Activated CD4-positive, alpha-beta T cell treated with anti-CD3 and anti-CD28 coated beads, Interleukin-2, amount 10 ng/mL, durations not matched to agents 24 days and 14 days (primary cell): ENCODE measurements at regions of chr20 and their contacts with region 1.

Region 1: DNA sequence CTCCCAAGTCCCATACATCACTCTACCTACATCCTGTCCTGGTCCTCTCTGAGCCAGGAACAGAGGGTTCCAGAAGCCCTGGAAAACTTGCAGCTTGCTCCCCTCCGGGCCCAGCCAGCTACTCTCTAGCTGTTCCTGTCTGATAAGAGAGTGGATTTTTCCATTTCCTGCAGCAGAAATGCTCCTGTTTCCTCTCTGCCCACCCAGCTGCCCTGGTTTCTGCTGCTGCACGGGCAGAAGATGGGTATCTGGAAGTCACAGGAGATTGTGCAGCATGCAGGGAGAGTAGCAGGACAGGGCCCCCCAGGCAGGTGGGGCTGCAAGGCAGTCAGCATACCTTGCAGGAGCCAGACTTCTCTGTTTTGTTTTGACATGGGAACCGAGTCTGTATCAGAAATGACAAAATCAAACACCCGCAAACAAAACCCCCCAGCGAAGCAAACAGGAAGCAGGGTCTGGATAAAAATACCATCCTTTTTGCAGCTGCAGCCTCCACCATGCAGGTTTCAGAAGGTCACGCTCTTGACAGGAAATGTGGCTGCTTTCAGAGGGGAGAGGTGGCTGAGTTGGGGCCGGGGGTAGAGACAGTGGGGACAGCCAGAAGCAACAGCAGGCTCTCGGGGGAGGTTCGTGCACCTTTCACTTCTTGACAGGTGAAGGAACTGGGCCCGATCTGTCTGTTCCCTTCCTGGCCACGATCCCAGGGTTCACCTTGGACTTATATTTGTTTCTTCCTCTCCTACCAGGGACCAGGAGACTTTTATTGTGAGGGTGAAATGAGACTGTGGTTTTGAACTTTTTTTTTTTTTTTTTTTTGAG is 50.8 kb upstream of the FAM83D start:
- DNase-seq: peak; percentile 89
- H3K4me3 Mint-ChIP-seq: peak overlapping the region; percentile 92
- H3K27ac Mint-ChIP-seq: peak overlapping the region; percentile 99
- H3K4me1 Mint-ChIP-seq: peaks cover 79% of the 10 kb centered on the region
- H3K27me3 Mint-ChIP-seq: peaks cover 2% of the 10 kb centered on the region

Region 2: GRCh38 chr20:38748097-38748860 is 127.1 kb before region 1 on chr20 and contains the start of gene ACTR5:
- intact Hi-C with region 1: loop called (anchors 5 kb)
- DNase-seq: peak; percentile 99
- H3K4me3 Mint-ChIP-seq: peak within 1 kb of the TSS; percentile 91
- H3K27ac Mint-ChIP-seq: peak within 1 kb of the TSS; percentile 93
- H3K4me1 Mint-ChIP-seq: peaks cover 21% of the 10 kb centered on the region
- H3K27me3 Mint-ChIP-seq: peaks cover 9% of the 10 kb centered on the region
- total RNA-seq, gene ACTR5: 15.2 and 15.8 TPM in 2 replicates

Region 3: DNA sequence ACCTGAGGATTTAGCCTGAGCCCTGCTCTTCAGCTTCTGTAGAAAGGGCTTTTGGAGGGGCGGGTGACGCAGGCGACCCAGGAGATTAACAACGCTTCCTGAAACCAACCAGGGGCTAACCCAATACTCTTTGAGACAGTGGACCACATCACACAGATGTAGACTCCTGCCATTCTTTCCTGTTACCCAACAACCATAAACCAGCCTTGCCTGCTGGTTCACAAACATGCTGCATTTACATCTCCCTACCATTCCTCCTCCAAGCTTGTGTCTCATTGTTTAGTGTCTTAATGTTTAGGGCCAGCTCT is 41.6 kb before region 1 on chr20:
- intact Hi-C with region 1: loop called (anchors 1 kb)
- DNase-seq: peak; percentile 69
- H3K4me3 Mint-ChIP-seq: peak overlapping the region; percentile 51
- H3K27ac Mint-ChIP-seq: peak overlapping the region; percentile 75
- H3K4me1 Mint-ChIP-seq: peaks cover 58% of the 10 kb centered on the region
- H3K27me3 Mint-ChIP-seq: no peaks in the 10 kb centered on the region

Region 4: GRCh38 chr20:38863024-38863851 is 12.1 kb before region 1 on chr20:
- intact Hi-C with region 1: loop called (anchors 1 kb)
- DNase-seq: peak; percentile 81
- H3K4me3 Mint-ChIP-seq: peak overlapping the region; percentile 49
- H3K27ac Mint-ChIP-seq: peak overlapping the region; percentile 87
- H3K4me1 Mint-ChIP-seq: peaks cover 62% of the 10 kb centered on the region
- H3K27me3 Mint-ChIP-seq: no peaks in the 10 kb centered on the region

Region 5: GRCh38 chr20:38997622-38998021 is 122.2 kb after region 1 on chr20:
- intact Hi-C with region 1: loop called (anchors 1 kb)
- DNase-seq: peak; percentile 77
- H3K4me3 Mint-ChIP-seq: peak overlapping the region; percentile 17
- H3K27ac Mint-ChIP-seq: peak overlapping the region; percentile 77
- H3K4me1 Mint-ChIP-seq: peaks cover 30% of the 10 kb centered on the region
- H3K27me3 Mint-ChIP-seq: no peaks in the 10 kb centered on the region